Activated CD4-positive, alpha-beta T cell treated with anti-CD3 and anti-CD28 coated beads, Interleukin-2, amount 10 ng/mL, durations not matched to agents 7 days and 5 days (primary cell): ENCODE measurements at regions of chr18 and their contacts with region 1.

Region 1: GRCh38 chr18:21777814-21778213 is 37.2 kb downstream of the MIB1 start:
- DNase-seq: no peak
- H3K4me3 Mint-ChIP-seq: no peak overlapping the region
- H3K27ac Mint-ChIP-seq: peak overlapping the region; percentile 10
- H3K4me1 Mint-ChIP-seq: no peaks in the 10 kb centered on the region
- H3K27me3 Mint-ChIP-seq: no peaks in the 10 kb centered on the region

Region 2: GRCh38 chr18:21629089-21629832 is 148.6 kb before region 1 on chr18:
- CTCF ChIA-PET with region 1: no interaction called
- POLR2A ChIA-PET with region 1: no interaction called
- DNase-seq: no peak
- H3K4me3 Mint-ChIP-seq: no peak overlapping the region
- H3K27ac Mint-ChIP-seq: peak overlapping the region; percentile 70
- H3K4me1 Mint-ChIP-seq: peaks cover 26% of the 10 kb centered on the region
- H3K27me3 Mint-ChIP-seq: no peaks in the 10 kb centered on the region

Region 3: DNA sequence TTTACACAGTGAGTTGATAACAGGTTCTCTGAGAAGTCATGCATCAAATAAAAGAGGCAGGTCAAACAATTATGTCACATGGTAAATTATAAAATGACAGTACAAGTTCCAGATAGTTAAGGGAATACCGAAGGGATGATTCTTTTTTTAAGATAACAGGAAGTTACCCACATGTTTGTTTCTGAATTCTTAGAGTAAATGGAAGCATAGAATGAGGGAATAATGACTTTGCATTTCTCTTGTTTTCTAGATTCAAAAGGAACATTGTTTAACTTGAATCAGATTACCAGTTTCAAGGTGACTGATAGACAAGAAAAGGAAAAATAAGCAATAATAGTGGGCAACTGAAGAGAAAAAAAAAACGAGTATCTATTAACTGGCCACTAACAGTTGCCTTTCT is 87.2 kb after region 1 on chr18:
- CTCF ChIA-PET with region 1: no interaction called
- POLR2A ChIA-PET with region 1: no interaction called
- DNase-seq: no peak
- H3K4me3 Mint-ChIP-seq: no peak overlapping the region
- H3K27ac Mint-ChIP-seq: no peak overlapping the region
- H3K4me1 Mint-ChIP-seq: no peaks in the 10 kb centered on the region
- H3K27me3 Mint-ChIP-seq: no peaks in the 10 kb centered on the region

Region 4: DNA sequence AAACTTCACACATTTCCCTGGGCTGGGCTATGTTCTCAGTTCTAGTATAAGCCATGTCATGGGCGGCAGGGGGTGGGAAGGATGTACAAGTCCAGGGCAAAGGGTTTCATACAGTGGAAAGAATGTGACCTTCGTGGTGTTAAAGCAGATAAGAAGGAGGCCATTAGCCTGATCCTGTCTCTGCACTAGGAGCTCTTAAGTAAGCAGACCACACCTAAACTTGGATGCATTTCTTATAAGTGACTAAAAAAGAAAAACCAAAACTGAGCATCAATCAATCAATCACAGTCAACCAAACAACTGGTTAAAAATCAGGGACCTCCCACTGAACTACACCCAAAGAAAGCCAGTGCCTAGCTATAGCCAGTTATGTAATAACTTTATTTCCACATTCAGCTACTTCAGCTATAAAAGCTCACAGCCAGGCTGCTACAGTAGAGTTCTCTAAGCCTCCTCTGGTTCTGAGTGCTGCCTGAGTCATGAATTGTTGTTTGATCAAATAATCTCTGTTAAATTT is 1628.5 kb after region 1 on chr18:
- CTCF ChIA-PET with region 1: no interaction called
- POLR2A ChIA-PET with region 1: interaction called, 10 read pairs
- DNase-seq: no peak
- H3K4me3 Mint-ChIP-seq: no peak overlapping the region
- H3K27ac Mint-ChIP-seq: no peak overlapping the region
- H3K4me1 Mint-ChIP-seq: no peaks in the 10 kb centered on the region
- H3K27me3 Mint-ChIP-seq: no peaks in the 10 kb centered on the region